H1 (cell line): ENCODE measurements at regions of chr7 and their contacts with region 1.

Region 1: DNA sequence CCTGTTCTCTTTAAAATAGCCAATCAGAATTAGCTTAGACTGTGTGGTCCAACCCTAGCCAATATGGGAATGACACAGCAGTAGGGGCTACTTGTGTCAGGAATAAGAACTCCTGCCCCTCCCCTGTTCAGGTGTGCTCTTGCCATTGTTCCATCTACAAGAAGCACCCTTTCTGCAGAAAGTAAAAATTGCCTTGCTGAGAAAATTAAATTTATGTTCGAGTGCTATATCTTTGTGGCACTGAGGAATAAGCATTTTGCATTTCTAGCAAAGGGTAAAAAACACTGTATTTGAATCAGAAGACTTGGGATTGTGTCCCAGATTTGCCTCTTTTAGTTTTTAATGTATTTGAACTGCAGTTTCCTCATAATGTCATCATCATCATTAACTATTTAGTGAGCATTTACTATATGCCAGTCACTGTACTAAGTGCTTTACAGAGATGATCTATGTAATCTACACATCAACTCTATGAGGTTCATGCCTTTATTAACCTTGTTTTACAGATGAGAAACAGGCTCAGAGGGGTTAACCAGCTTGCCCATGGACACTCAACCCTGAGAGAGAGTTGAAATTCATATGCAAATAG is 28.9 kb upstream of the XRCC2 start:
- DNase-seq: no peak
- H3K4me3 ChIP-seq: no peak overlapping the region
- H3K27ac ChIP-seq: no peak overlapping the region
- H3K4me1 ChIP-seq: no peaks in the 10 kb centered on the region; a peak in 2 of 7 replicates
- H3K27me3 ChIP-seq: no peaks in the 10 kb centered on the region
- CTCF ChIP-seq: no peak
- EP300 ChIP-seq: no peak
- POLR2A ChIP-seq: no peak
- RAD21 ChIP-seq: no peak

Region 2: DNA sequence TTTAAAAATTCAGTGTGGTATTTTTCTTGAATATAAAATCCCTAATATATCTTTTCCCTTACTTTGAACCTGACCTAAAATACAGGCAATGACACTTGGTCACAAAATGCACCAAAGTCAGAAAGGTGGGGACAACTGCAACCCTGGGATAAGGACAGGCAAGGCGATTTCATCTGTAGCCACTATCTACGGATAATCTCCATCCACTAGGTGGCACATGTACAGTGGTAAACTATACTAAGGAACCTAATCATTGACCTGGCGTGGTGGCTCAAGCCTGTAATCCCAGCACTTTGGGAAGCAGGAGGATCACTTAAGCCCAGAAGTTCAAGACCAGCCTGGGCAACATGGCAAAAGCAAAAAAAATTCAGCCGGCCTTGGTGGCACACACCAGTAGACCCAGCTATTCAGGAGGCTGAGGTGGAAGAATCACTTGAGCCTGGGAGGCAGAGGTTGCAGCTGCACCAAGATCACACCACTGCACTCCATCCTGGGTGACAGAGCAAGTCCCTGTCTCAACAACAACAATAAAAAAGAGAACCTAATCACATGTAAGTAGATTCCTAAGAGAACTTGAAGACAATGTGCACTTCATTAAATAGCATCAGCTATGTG is 368.0 kb before region 1 on chr7:
- CTCF ChIA-PET with region 1: interaction called, 21 read pairs
- POLR2A ChIA-PET with region 1: no interaction called
- DNase-seq: no peak
- H3K4me3 ChIP-seq: no peak overlapping the region
- H3K27ac ChIP-seq: no peak overlapping the region
- H3K4me1 ChIP-seq: peaks cover 0 to 3% (median 0%) of the 10 kb centered on the region in 4 experiments; a peak in 2 of 7 replicates
- H3K27me3 ChIP-seq: no peaks in the 10 kb centered on the region
- CTCF ChIP-seq: peak in 2 of 3 experiments; percentile 59 to 62; a peak in 3 of 4 replicates
- EP300 ChIP-seq: no peak
- POLR2A ChIP-seq: no peak
- RAD21 ChIP-seq: peak; percentile 65 to 69

Region 3: GRCh38 chr7:152654971-152655370 is 49.9 kb before region 1 on chr7:
- CTCF ChIA-PET with region 1: no interaction called
- POLR2A ChIA-PET with region 1: no interaction called
- DNase-seq: no peak
- H3K4me3 ChIP-seq: no peak overlapping the region
- H3K27ac ChIP-seq: no peak overlapping the region
- H3K4me1 ChIP-seq: no peaks in the 10 kb centered on the region
- H3K27me3 ChIP-seq: no peaks in the 10 kb centered on the region
- CTCF ChIP-seq: no peak
- EP300 ChIP-seq: no peak
- POLR2A ChIP-seq: no peak
- RAD21 ChIP-seq: no peak

Region 4: DNA sequence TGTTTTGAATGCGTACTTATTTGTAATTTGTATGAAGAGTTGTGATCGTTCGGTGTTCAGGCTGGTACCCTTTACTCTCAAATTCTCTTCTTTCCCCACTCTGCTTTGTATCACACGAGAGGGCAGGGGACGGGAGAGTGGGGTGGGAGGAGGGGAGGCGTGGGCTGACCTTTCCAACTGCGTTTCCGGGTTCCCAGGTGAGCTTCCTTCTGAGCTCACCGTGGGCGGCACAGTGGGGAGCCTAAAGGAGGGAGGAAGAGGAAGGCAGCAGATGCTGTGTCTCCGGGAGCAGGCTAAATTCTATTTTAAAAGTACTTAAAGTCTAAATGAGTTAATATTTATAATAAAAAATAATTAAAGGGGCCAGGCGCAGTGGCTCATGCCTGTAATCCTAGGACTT is 21.6 kb before region 1 on chr7:
- CTCF ChIA-PET with region 1: interaction called, 12 read pairs
- POLR2A ChIA-PET with region 1: no interaction called
- DNase-seq: no peak
- H3K4me3 ChIP-seq: no peak overlapping the region
- H3K27ac ChIP-seq: no peak overlapping the region
- H3K4me1 ChIP-seq: no peaks in the 10 kb centered on the region
- H3K27me3 ChIP-seq: no peaks in the 10 kb centered on the region
- CTCF ChIP-seq: no peak
- EP300 ChIP-seq: no peak
- POLR2A ChIP-seq: no peak
- RAD21 ChIP-seq: no peak